Dendritic cell treated with granulocyte-macrophage colony-stimulating factor and Interleukin-4, amounts not matched to agents 40 ng/mL and 50 ng/mL, for 4 days (primary cell): ENCODE measurements at regions of chr1 and their contacts with region 1.

Region 1: DNA sequence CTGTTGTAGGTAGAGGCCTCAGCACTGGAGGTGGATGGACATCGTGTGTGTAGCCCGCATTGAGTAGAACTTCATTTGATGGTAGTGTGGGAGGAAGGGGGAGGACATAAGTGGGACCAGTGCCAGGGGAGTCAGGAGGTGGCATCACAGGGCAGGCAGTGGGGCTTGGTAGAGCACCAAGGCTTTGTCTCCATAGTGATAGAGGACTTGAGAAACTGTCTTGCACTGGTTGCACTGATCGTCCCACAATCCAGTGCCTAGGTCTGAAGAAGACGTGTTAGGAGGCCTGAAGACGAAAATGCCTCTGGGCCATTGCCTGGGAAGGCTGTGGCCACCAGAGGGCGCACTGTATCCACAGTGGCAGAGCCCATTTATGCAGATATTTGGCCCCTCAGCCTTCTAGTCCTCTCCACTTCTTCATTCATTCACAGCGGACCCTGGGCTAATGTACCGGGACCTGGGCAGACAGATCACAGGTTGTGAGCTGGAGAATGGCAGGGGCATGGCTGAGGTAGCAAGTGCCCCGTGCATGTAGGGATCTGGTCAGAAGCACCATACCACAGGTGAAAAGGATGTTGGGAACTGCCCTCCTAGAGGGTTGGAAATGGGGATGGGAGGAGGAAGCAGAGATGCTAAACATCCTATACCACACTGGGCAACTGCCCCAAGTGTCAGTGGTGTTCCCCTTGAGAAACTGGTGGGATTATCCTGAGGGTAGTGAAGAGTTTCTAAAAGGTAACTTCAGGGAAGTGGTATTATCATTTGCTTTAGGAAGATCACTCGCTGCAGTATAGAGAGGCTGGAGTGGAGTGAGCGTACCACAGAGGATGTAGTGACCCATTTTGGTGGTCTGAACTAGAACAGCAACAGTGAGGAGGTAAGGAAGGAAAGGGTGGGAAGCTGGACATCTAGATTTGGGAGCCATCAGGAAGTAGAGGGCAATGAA is 95.3 kb downstream of the PIK3R3 start:
- H3K4me3 Mint-ChIP-seq: no peak overlapping the region
- H3K27ac Mint-ChIP-seq: no peak overlapping the region
- H3K4me1 Mint-ChIP-seq: peaks cover 8% of the 10 kb centered on the region
- H3K27me3 Mint-ChIP-seq: no peaks in the 10 kb centered on the region

Region 2: GRCh38 chr1:45750298-45751038 is 286.7 kb before region 1 on chr1 and contains the start of gene IPP:
- intact Hi-C with region 1: no loop called
- H3K4me3 Mint-ChIP-seq: peak within 1 kb of the TSS; percentile 85
- H3K27ac Mint-ChIP-seq: peak within 1 kb of the TSS; percentile 100
- H3K4me1 Mint-ChIP-seq: peaks cover 19% of the 10 kb centered on the region
- H3K27me3 Mint-ChIP-seq: no peaks in the 10 kb centered on the region

Region 3: GRCh38 chr1:46179138-46180081 is 142.2 kb after region 1 on chr1:
- intact Hi-C with region 1: loop called (anchors 1 kb)
- H3K4me3 Mint-ChIP-seq: no peak overlapping the region
- H3K27ac Mint-ChIP-seq: no peak overlapping the region
- H3K4me1 Mint-ChIP-seq: peaks cover 8% of the 10 kb centered on the region
- H3K27me3 Mint-ChIP-seq: peaks cover 7% of the 10 kb centered on the region

Region 4: DNA sequence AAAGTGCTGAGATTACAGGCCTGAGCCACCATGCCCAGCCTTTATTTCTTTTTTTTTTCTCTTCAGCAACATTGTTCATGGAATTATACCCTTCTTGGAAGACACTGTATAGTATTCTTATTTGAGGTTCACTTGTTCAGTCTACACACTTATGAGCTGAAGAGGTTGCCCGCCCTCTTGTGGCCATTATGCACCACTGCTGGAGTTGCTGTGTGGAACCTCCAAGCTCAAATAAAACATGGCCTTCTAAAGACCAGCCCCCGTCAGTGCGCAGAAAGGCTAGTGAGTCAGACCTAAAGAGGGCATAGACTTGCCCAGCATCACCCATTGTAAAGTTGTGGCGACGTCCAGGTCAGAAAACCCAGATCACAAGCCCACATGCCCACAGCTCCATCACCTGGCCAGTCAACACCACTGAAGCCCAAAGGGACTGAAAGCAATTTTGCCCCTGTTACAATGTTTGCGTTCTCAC is 186.3 kb after region 1 on chr1:
- intact Hi-C with region 1: loop called (anchors 1 kb)
- H3K4me3 Mint-ChIP-seq: no peak overlapping the region
- H3K27ac Mint-ChIP-seq: no peak overlapping the region
- H3K4me1 Mint-ChIP-seq: peaks cover 11% of the 10 kb centered on the region
- H3K27me3 Mint-ChIP-seq: peaks cover 3% of the 10 kb centered on the region